ENCODE measurements at regions of chr7 and their contacts with region 1.

Region 1: DNA sequence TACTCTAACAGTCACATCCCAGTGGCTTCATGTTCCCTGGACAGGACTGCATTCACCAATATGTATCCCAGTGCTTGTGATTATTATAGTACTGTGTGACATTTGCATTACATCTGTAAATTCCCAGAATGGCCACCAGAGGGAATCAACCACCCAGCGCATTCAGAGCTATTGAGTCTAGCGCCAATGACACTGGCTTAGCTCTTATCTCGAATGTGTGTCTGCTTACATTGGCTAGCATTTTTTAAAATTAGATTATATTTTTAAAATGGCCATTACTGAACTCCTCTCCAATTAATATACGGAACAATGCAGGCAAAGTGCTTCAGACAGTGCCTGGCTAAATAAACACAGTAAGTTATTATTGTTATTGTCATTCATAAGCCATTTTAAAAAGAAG is 36.3 kb downstream of the TRIL start:
- DNase-seq: no peak
- ATAC-seq: peak; percentile 87
- H3K4me3 Mint-ChIP-seq: no peak overlapping the region
- H3K27ac Mint-ChIP-seq: no peak overlapping the region
- H3K4me1 Mint-ChIP-seq: peaks cover 12% of the 10 kb centered on the region
- H3K27me3 Mint-ChIP-seq: peaks cover 3% of the 10 kb centered on the region
- CTCF ChIP-seq: peak; percentile 83

Region 2: GRCh38 chr7:28908775-28909174 is 13.0 kb before region 1 on chr7:
- CTCF ChIA-PET with region 1: interaction called, 25 read pairs
- POLR2A ChIA-PET with region 1: no interaction called
- intact Hi-C with region 1: no loop called
- DNase-seq: no peak
- ATAC-seq: no peak
- H3K4me3 Mint-ChIP-seq: no peak overlapping the region
- H3K27ac Mint-ChIP-seq: no peak overlapping the region
- H3K4me1 Mint-ChIP-seq: no peaks in the 10 kb centered on the region
- H3K27me3 Mint-ChIP-seq: peaks cover 24% of the 10 kb centered on the region
- CTCF ChIP-seq: no peak

Region 3: DNA sequence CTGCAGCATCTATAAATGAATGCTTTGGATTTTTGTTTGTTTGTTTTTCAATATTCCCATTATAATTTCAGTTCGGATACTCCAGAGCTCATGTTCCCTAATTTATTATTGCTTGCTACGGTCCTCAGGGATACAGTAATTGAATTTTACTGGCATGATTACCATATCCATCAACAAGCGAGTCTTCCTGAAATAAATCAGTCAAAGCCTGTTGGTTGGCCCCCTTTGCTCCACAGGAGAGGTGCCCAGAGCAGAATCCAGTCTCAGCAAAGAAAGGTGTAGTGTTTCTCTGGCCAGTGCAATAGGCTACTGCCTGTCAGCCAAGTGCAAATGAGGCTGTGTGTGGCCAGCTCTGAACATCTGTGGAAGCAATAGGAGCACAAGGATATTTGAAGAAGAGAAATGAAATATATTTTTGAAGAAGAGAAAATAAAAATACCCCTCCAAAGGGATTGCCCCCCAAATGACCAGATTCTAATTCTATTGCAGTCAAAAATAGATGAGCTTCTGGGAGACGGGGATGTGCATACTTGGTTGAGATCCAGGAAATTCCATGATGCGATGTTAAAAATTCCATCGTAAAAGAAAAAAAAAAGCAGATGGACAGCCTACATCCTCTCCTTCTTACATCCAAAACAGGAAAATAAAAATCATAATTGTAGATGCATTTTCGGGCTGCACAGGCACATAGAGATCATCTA is 18.2 kb after region 1 on chr7:
- CTCF ChIA-PET with region 1: interaction called, 16 read pairs
- POLR2A ChIA-PET with region 1: no interaction called
- intact Hi-C with region 1: no loop called
- DNase-seq: no peak
- ATAC-seq: no peak
- H3K4me3 Mint-ChIP-seq: no peak overlapping the region
- H3K27ac Mint-ChIP-seq: no peak overlapping the region
- H3K4me1 Mint-ChIP-seq: no peaks in the 10 kb centered on the region
- H3K27me3 Mint-ChIP-seq: peaks cover 32% of the 10 kb centered on the region
- CTCF ChIP-seq: no peak

Region 4: DNA sequence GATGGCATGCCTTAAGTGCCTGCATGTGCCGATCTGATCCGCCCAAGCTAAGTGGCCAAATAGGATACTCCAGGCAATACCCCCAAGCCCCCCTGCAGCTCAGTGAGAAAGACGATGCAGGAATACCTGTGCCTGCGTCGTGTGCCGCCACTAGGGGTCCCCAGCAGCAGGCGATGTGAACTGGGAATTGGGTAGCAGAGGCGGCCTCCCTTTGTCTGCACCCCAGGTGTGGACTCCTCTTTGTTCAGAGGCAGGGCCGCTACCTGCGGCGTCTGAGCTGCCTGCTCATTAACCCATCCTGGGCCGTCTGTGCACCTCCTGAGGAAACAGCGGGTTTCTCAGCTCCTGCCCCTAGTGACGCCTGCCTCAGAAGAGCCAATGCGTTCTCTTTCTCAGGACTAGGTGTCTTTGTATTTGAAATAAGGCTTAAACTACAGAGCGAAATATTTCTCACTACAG is 267.9 kb after region 1 on chr7:
- CTCF ChIA-PET with region 1: interaction called, 6 read pairs
- POLR2A ChIA-PET with region 1: no interaction called
- intact Hi-C with region 1: loop called (anchors 2 kb)
- DNase-seq: peak; percentile 24
- ATAC-seq: peak; percentile 56
- H3K4me3 Mint-ChIP-seq: no peak overlapping the region
- H3K27ac Mint-ChIP-seq: no peak overlapping the region
- H3K4me1 Mint-ChIP-seq: peaks cover 5% of the 10 kb centered on the region
- H3K27me3 Mint-ChIP-seq: peaks cover 38% of the 10 kb centered on the region
- CTCF ChIP-seq: no peak

Measured in activated B cell treated with CpG ODN at 0.5 μM for 24 hours (primary cell).